ENCODE measurements at regions of chr3 and their contacts with region 1.

Region 1: DNA sequence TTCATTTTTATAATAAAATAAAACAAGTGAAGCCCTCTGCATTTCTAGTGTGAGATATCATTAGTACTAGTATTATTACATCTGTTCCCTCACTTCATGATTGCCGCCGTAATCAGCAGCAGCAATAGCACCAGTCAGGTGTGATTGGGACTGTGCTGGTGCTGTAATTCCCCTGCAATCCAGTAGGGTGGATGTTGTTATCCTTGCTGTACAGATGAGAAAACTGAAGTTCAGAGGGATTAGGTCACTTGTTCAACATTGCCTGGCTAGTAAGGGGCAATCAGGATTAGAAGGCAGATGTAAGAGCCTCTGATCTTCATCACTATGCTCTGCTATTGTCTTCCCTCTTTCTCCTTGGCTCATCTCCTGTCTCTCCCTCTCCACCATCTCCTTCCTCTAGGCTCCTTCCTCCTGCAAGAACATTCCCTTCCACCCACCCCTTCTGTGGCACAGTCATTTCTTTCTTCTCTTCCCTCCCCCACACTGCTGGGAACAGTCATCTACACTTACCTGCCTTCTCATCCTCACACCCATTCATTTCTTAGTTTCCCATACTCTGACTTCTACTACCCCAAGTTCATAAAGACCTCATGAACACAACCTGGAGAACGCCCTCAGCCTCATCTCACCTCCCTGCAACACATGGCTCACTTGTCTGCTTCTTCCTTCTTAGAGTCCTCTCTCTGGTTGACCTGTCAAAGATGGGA is 29.7 kb downstream of the CRYGS start:
- DNase-seq: no peak
- ATAC-seq: no peak
- H3K4me3 ChIP-seq: no peak overlapping the region
- H3K27ac ChIP-seq: no peak overlapping the region
- H3K4me1 ChIP-seq: peaks cover 59% of the 10 kb centered on the region
- H3K27me3 ChIP-seq: no peaks in the 10 kb centered on the region
- CTCF ChIP-seq: peak; percentile 15 to 54 (median 49); a peak in 4 of 6 replicates
- EP300 ChIP-seq: no peak
- POLR2A ChIP-seq: no peak
- RAD21 ChIP-seq: peak; percentile 36; the same call in 1 of the 2 replicates

Region 2: DNA sequence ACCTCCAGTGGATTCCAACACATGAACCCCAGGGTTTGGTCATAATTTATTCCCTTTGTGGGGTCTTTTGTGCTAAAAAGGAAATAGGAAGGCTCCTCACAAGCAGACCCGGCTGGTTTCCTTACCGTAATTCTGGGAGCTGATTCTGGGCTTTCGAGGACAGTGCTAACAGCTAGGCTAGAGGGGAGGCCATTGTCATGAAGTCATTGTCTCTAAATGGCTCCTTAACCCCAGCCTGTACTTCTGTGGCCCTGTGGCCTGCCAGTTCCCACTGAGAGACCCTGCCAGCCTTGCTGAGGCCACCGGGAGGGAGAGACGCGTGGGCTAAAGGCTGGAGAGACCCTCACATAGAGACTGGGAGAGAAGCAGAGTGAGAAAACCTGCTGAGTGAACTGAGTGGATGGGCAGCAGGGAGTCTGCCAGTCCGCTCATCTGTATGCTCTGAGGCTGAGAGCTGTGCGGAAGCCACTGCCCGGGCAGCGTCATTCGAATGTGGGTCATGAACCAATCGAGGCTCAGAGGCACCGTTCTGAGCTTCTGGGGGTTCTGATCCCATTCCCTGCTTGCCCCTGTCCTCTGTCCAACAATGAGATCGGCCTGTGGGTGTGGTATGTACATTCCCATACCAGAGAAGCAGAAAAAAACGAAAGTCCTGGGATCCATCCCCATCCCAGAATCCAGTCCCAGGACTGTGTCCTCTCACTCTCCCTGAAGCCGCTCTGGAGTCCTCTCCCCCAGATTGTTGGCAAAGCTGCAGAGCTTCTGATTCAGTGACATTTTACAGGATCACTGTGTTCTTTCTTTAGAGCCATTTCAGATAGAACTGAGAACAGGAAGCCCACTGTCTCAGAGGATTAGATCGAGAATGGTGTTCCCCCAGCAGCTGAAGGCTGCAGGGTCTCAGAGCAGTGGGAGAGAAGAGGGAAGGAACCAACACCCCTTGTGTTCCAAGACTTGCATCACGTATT is 131.1 kb before region 1 on chr3:
- CTCF ChIA-PET with region 1: no interaction called
- POLR2A ChIA-PET with region 1: no interaction called
- RAD21 ChIA-PET with region 1: no interaction called
- SMC1A ChIA-PET with region 1: no interaction called
- in situ Hi-C with region 1: no loop called
- intact Hi-C with region 1: no loop called
- DNase-seq: no peak
- ATAC-seq: no peak
- H3K4me3 ChIP-seq: no peak overlapping the region
- H3K27ac ChIP-seq: no peak overlapping the region
- H3K4me1 ChIP-seq: peaks cover 10% of the 10 kb centered on the region; the same call in 1 of the 2 replicates
- H3K27me3 ChIP-seq: no peaks in the 10 kb centered on the region
- CTCF ChIP-seq: no peak
- EP300 ChIP-seq: no peak
- POLR2A ChIP-seq: no peak
- RAD21 ChIP-seq: no peak

Region 3: GRCh38 chr3:186526256-186526606 is 11.8 kb after region 1 on chr3:
- CTCF ChIA-PET with region 1: interaction called, 18 read pairs
- POLR2A ChIA-PET with region 1: interaction called, 17 read pairs
- RAD21 ChIA-PET with region 1: interaction called, 23 read pairs
- SMC1A ChIA-PET with region 1: interaction called, 38 read pairs
- in situ Hi-C with region 1: no loop called
- intact Hi-C with region 1: no loop called
- DNase-seq: no peak
- ATAC-seq: peak; percentile 77
- H3K4me3 ChIP-seq: no peak overlapping the region; the same call in 1 of the 2 replicates
- H3K27ac ChIP-seq: peak overlapping the region; percentile 66
- H3K4me1 ChIP-seq: peaks cover 43% of the 10 kb centered on the region
- H3K27me3 ChIP-seq: no peaks in the 10 kb centered on the region
- CTCF ChIP-seq: no peak
- EP300 ChIP-seq: no peak
- POLR2A ChIP-seq: no peak
- RAD21 ChIP-seq: no peak

Region 4: DNA sequence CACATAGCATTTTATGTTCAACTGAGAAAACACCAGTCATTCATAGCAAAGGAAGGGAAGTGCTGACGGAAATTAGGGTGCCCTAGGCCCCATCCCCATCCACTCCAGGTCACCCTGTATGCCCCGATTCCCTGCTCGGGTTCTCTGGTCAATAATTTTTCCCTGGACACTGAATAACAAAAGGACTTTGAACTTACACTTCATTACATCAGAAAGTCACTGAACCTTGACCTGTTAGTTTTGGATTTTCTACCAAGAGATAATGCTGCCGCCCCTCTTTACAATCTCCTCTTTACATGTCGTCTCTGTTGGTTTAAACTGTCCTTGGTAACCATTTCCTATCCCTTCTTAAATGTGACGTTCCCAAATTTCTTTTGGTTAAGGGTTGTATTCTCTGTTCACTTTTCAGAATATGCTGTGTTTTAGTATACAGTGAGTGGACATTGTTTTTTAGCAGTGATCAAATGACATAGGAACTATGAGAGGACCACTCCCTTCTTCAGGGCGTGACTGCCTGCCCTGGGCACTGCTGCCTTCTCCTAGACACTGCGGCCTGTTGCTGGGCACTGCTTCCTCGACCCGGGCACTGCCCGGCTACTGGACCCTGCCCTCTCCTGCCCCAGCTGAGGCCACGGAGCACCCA is 84.8 kb after region 1 on chr3:
- CTCF ChIA-PET with region 1: no interaction called
- POLR2A ChIA-PET with region 1: no interaction called
- RAD21 ChIA-PET with region 1: no interaction called
- SMC1A ChIA-PET with region 1: no interaction called
- in situ Hi-C with region 1: no loop called
- intact Hi-C with region 1: no loop called
- DNase-seq: no peak
- ATAC-seq: peak; percentile 21; the same call in 2 of the 3 replicates
- H3K4me3 ChIP-seq: no peak overlapping the region
- H3K27ac ChIP-seq: no peak overlapping the region
- H3K4me1 ChIP-seq: no peaks in the 10 kb centered on the region
- H3K27me3 ChIP-seq: no peaks in the 10 kb centered on the region
- CTCF ChIP-seq: no peak
- EP300 ChIP-seq: no peak
- POLR2A ChIP-seq: no peak
- RAD21 ChIP-seq: no peak

Region 5: GRCh38 chr3:187039100-187039722 is 524.8 kb after region 1 on chr3:
- CTCF ChIA-PET with region 1: no interaction called
- POLR2A ChIA-PET with region 1: no interaction called
- RAD21 ChIA-PET with region 1: no interaction called
- SMC1A ChIA-PET with region 1: no interaction called
- in situ Hi-C with region 1: no loop called
- intact Hi-C with region 1: no loop called
- DNase-seq: no peak
- ATAC-seq: no peak
- H3K4me3 ChIP-seq: no peak overlapping the region
- H3K27ac ChIP-seq: no peak overlapping the region
- H3K4me1 ChIP-seq: peaks cover 55% of the 10 kb centered on the region
- H3K27me3 ChIP-seq: no peaks in the 10 kb centered on the region
- CTCF ChIP-seq: no peak
- EP300 ChIP-seq: no peak
- POLR2A ChIP-seq: 0 out of 2 replicates have a peak, but pooled peaks have one; percentile 11
- RAD21 ChIP-seq: no peak